Head of caudate nucleus (tissue), 42 donors: ENCODE measurements at regions of chr19 and their contacts with region 1.

Region 1: DNA sequence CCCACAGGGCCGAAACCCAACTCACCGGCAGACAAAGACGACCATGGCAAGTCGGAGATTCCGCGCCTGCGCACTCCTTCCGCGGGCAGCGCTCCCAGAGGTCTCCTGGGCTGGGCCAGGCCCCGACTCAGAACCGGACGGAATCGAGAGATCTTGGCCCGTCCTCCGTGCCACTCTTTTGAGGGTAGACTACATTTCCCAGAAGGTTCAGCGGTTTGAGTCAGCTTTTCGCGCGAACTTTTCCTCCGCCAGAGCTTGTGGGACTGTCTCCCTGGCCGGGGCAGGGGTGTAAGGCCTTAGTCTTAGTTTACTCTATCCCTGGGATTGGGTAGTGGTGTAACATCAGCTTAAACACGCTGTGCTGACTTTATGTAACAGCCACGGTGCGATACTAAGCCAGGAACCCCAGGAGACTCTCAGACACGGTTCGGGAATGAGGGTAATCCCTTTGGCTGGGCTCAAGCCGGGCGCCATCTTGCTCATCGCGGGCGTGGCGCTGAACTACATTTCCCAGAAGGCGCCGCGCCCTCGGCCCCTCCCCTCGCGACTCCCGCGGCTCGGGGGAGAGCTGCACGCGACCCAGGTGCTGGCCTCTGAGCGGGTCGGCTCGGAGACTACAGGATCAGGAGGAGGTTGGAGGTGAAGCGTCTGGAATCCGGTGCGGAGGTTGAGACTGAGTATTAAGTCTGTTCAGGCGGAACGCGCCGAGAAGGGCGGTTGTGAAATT is at the start of gene ZNF260:
- DNase-seq: peak; percentile 95 to 99 (median 98)

Region 2: DNA sequence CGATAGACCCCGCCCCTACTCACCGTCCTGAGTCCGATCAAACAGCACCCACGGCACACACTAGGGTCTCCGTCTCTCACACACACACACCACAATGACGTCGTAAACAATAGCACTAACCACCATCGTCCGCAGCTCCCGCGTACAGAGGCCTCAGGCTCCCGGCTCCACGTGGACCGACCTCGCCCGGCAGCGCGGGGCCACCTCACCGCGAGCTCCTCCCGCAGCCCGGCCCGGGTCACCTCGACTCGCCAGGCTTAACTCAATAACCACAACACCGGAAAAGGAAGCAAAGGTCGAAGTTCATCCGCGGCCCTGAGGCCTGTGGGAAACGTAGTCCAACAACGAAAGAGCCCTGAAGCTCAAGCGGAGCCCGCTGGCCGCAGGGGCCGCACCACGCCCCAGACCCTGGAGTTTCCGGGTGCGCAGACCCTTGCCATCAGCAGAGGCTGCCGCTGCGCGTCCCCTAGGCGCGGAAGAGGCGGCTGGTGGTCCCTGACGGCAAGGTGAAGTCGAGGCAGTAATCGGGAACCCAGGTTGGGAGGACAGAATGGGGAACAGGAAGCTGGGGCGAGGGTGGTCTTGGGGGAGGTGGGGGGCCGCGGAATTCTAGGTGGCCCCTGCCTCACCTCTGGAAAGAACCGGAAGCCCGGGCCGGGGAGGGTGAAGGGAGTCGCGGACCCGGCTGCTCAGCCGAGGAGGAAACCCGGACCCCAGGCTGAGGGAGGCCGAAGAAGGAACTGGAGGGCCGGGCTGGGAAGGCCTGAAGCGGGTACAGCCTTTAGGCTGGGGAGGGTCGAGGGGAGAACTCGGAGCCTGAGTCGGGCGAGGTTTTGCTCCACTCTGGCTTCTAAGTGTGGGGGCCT is 44.9 kb after region 1 on chr19 and contains the start of gene ZNF529:
- intact Hi-C with region 1: loop called (anchors 5 kb)
- DNase-seq: peak; percentile 86 to 96 (median 92)

Region 3: DNA sequence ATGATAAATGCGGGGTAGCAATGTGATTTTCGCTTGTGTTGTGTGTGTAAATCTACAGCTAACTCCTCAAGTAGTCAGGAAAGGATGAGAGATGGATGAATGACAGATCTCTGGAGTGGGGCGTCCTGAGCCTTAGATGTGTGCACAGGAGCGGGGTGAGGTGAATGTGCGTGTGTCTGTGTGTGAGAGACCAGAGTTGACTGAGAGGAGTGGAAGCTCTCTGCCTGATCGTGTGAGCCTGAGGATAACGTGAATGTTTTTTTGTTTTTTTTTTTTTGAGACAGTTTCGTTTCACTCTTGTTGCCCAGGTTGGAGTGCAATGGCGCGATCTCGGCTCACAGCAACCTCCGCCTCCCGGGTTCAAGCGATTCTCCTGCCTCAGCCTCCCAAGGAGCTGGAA is 137.5 kb after region 1 on chr19:
- intact Hi-C with region 1: loop called (anchors 5 kb)
- DNase-seq: no peak

Region 4: GRCh38 chr19:36837906-36838783 is 309.8 kb after region 1 on chr19 and contains the start of gene ZNF790:
- intact Hi-C with region 1: loop called (anchors 5 kb)
- DNase-seq: peak; percentile 85 to 97 (median 93)